ENCODE measurements at regions of chr7 and their contacts with region 1.

Region 1: GRCh38 chr7:94289071-94289470 is 105.6 kb upstream of the COL1A2 start:
- DNase-seq: peak; percentile 74
- ATAC-seq: peak; percentile 97
- H3K4me3 ChIP-seq: no peak overlapping the region
- H3K27ac ChIP-seq: no peak overlapping the region
- H3K4me1 ChIP-seq: no peaks in the 10 kb centered on the region
- H3K27me3 ChIP-seq: peaks cover 0 to 4% of the 10 kb centered on the region in 2 experiments; a peak in 1 of 5 replicates
- CTCF ChIP-seq: peak; percentile 87
- EP300 ChIP-seq: no peak
- POLR2A ChIP-seq: no peak
- RAD21 ChIP-seq: peak; percentile 88

Region 2: GRCh38 chr7:94190599-94191061 is 98.4 kb before region 1 on chr7:
- CTCF ChIA-PET with region 1: no interaction called
- POLR2A ChIA-PET with region 1: no interaction called
- in situ Hi-C with region 1: no loop called
- intact Hi-C with region 1: no loop called
- DNase-seq: no peak
- ATAC-seq: no peak
- H3K4me3 ChIP-seq: no peak overlapping the region
- H3K27ac ChIP-seq: no peak overlapping the region
- H3K4me1 ChIP-seq: no peaks in the 10 kb centered on the region
- H3K27me3 ChIP-seq: no peaks in the 10 kb centered on the region
- CTCF ChIP-seq: no peak
- EP300 ChIP-seq: no peak
- POLR2A ChIP-seq: no peak
- RAD21 ChIP-seq: no peak

Region 3: DNA sequence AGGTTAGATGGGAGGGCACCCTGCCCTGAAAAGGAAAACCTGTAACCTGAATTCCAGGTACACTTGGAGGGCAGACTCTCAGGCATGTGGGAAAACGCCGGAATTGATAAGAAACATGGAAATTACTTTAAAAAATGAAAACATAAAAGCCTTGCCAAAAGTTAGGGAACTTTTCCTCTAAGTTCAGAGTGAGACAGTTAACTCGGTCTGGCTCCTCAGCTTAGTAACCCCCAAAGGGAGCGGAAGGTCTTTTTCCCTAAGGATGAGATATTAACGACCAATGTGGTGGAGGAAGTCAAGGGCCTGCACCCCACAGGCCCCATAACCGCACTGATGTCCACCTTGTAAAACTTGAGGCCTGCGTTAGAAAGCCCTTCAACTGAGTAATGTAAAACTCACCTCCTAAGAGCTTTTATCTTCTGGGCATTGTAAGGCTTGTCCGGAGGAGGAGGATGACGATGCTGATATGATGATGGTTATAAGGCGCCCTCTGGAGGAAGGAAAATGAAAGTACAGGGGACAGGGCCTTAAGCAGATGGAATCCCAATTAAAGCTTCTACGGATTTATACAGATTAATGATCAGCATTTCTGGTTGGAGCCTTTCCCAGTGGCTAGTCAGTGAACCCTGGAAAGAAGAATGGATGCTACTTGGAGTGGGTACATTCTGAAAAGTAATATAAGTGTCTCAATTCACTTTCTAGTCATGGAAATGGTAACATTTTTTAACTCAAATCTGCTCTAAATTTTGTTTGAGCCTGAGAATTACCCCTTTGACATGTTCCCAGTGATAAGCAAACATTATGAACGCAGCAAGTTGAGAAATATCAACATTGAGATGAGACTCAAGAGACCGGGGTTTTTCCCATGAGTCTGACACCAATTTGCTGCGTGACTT is 106.3 kb after region 1 on chr7:
- CTCF ChIA-PET with region 1: interaction called, 12 read pairs
- POLR2A ChIA-PET with region 1: no interaction called
- in situ Hi-C with region 1: no loop called
- intact Hi-C with region 1: loop called (anchors 1 kb)
- DNase-seq: peak; percentile 63
- ATAC-seq: peak; percentile 89
- H3K4me3 ChIP-seq: no peak overlapping the region
- H3K27ac ChIP-seq: no peak overlapping the region
- H3K4me1 ChIP-seq: no peaks in the 10 kb centered on the region
- H3K27me3 ChIP-seq: no peaks in the 10 kb centered on the region; a peak in 1 of 5 replicates
- CTCF ChIP-seq: peak; percentile 76
- EP300 ChIP-seq: no peak
- POLR2A ChIP-seq: no peak
- RAD21 ChIP-seq: peak; percentile 55; the same call in 1 of the 2 replicates

Region 4: DNA sequence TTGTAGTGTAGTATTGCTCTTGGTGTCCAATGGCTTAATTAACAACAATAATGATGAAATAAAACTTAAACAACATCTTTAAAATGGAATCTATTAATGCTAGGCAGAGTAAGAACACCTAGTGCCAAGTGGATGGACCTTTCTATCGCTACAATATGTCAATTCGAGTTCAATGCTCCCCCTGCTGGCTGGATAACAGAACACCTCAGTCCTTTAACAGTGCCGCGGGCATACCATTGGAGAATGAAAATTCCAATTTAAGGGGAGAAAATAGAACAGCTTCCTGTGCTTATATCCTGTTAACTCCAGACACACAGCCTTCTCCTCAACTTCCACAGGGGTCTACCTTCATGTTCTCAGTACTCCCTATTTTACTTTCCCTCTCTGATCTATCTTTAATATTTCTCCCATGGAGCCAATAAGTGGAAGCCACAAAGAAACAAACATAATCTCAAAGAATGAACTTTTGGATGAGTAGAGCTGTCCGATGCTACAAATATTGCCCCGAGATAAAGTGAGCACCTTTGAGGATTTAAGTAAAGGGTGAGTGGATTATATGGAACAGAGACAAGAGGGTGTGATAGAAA is 147.0 kb after region 1 on chr7:
- CTCF ChIA-PET with region 1: interaction called, 15 read pairs
- POLR2A ChIA-PET with region 1: no interaction called
- in situ Hi-C with region 1: no loop called
- intact Hi-C with region 1: loop called (anchors 1 kb)
- DNase-seq: peak; percentile 71
- ATAC-seq: peak; percentile 85
- H3K4me3 ChIP-seq: no peak overlapping the region
- H3K27ac ChIP-seq: no peak overlapping the region
- H3K4me1 ChIP-seq: peaks cover 53% of the 10 kb centered on the region
- H3K27me3 ChIP-seq: no peaks in the 10 kb centered on the region; a peak in 1 of 5 replicates
- CTCF ChIP-seq: peak; percentile 78
- EP300 ChIP-seq: no peak
- POLR2A ChIP-seq: no peak
- RAD21 ChIP-seq: peak; percentile 19; the same call in 1 of the 2 replicates

Region 5: GRCh38 chr7:94810496-94810895 is 521.4 kb after region 1 on chr7:
- CTCF ChIA-PET with region 1: no interaction called
- POLR2A ChIA-PET with region 1: no interaction called
- in situ Hi-C with region 1: no loop called
- intact Hi-C with region 1: no loop called
- DNase-seq: no peak
- ATAC-seq: no peak
- H3K4me3 ChIP-seq: no peak overlapping the region
- H3K27ac ChIP-seq: no peak overlapping the region
- H3K4me1 ChIP-seq: no peaks in the 10 kb centered on the region
- H3K27me3 ChIP-seq: no peaks in the 10 kb centered on the region
- CTCF ChIP-seq: no peak
- EP300 ChIP-seq: no peak
- POLR2A ChIP-seq: no peak
- RAD21 ChIP-seq: no peak

Region 6: GRCh38 chr7:95246831-95247370 is 957.8 kb after region 1 on chr7:
- CTCF ChIA-PET with region 1: no interaction called
- POLR2A ChIA-PET with region 1: no interaction called
- in situ Hi-C with region 1: loop called (anchors 25 kb)
- intact Hi-C with region 1: loop called (anchors 1 kb)
- DNase-seq: peak; percentile 54
- ATAC-seq: peak; percentile 80
- H3K4me3 ChIP-seq: no peak overlapping the region
- H3K27ac ChIP-seq: no peak overlapping the region
- H3K4me1 ChIP-seq: no peaks in the 10 kb centered on the region
- H3K27me3 ChIP-seq: no peaks in the 10 kb centered on the region
- CTCF ChIP-seq: peak; percentile 74
- EP300 ChIP-seq: no peak
- POLR2A ChIP-seq: no peak
- RAD21 ChIP-seq: no peak

Region 7: GRCh38 chr7:95263785-95264575 is 974.9 kb after region 1 on chr7:
- CTCF ChIA-PET with region 1: no interaction called
- POLR2A ChIA-PET with region 1: no interaction called
- in situ Hi-C with region 1: loop called (anchors 25 kb)
- intact Hi-C with region 1: no loop called
- DNase-seq: no peak
- ATAC-seq: no peak
- H3K4me3 ChIP-seq: no peak overlapping the region
- H3K27ac ChIP-seq: no peak overlapping the region
- H3K4me1 ChIP-seq: no peaks in the 10 kb centered on the region
- H3K27me3 ChIP-seq: no peaks in the 10 kb centered on the region
- CTCF ChIP-seq: no peak
- EP300 ChIP-seq: no peak
- POLR2A ChIP-seq: no peak
- RAD21 ChIP-seq: no peak

Region 8: GRCh38 chr7:95690367-95690947 is 1401.4 kb after region 1 on chr7:
- CTCF ChIA-PET with region 1: no interaction called
- POLR2A ChIA-PET with region 1: no interaction called
- in situ Hi-C with region 1: loop called (anchors 25 kb)
- intact Hi-C with region 1: no loop called
- DNase-seq: peak; percentile 47
- ATAC-seq: peak; percentile 83
- H3K4me3 ChIP-seq: no peak overlapping the region
- H3K27ac ChIP-seq: no peak overlapping the region
- H3K4me1 ChIP-seq: no peaks in the 10 kb centered on the region
- H3K27me3 ChIP-seq: no peaks in the 10 kb centered on the region
- CTCF ChIP-seq: peak; percentile 72
- EP300 ChIP-seq: no peak
- POLR2A ChIP-seq: no peak
- RAD21 ChIP-seq: peak; percentile 25; the same call in 1 of the 2 replicates

Measured in HepG2 (cell line).